Left ventricle myocardium superior (tissue), 1 donor: ENCODE measurements at regions of chr13 and their contacts with region 1.

Region 1: GRCh38 chr13:79775830-79776229 is 294.9 kb downstream of the NDFIP2 start:
- DNase-seq: no peak
- ATAC-seq: peak; percentile 68

Region 2: GRCh38 chr13:80363890-80364503 is 588.2 kb after region 1 on chr13:
- intact Hi-C with region 1: loop called (anchors 10 kb)
- DNase-seq: no peak
- ATAC-seq: no peak